B cell (primary cell): ENCODE measurements at regions of chr5 and their contacts with region 1.

Region 1: GRCh38 chr5:139392678-139393496 is 2.0 kb downstream of the PROB1 start:
- DNase-seq: peak; percentile 93
- ATAC-seq: peak; percentile 56
- H3K4me3 ChIP-seq: peak overlapping the region; percentile 69 to 90 (median 80)
- H3K4me3 Mint-ChIP-seq: peak overlapping the region; percentile 99
- H3K27ac ChIP-seq: peak overlapping the region; percentile 60 to 65
- H3K27ac Mint-ChIP-seq: peak overlapping the region; percentile 93
- H3K4me1 ChIP-seq: peaks cover 44 to 60% of the 10 kb centered on the region in 2 donors
- H3K4me1 Mint-ChIP-seq: peaks cover 46% of the 10 kb centered on the region
- H3K27me3 ChIP-seq: no peaks in the 10 kb centered on the region
- H3K27me3 Mint-ChIP-seq: no peaks in the 10 kb centered on the region
- CTCF ChIP-seq: peak; percentile 94

Region 2: GRCh38 chr5:139251281-139251687 is 141.6 kb before region 1 on chr5:
- CTCF ChIA-PET with region 1: interaction called, 6 read pairs
- POLR2A ChIA-PET with region 1: no interaction called
- intact Hi-C with region 1: loop called (anchors 1 kb)
- DNase-seq: peak; percentile 63
- ATAC-seq: peak; percentile 41
- H3K4me3 ChIP-seq: no peak overlapping the region
- H3K4me3 Mint-ChIP-seq: no peak overlapping the region
- H3K27ac ChIP-seq: no peak overlapping the region
- H3K27ac Mint-ChIP-seq: no peak overlapping the region
- H3K4me1 ChIP-seq: no peaks in the 10 kb centered on the region
- H3K4me1 Mint-ChIP-seq: peaks cover 2% of the 10 kb centered on the region
- H3K27me3 ChIP-seq: no peaks in the 10 kb centered on the region
- H3K27me3 Mint-ChIP-seq: peaks cover 3% of the 10 kb centered on the region
- CTCF ChIP-seq: peak; percentile 59

Region 3: GRCh38 chr5:139341650-139342422 is 51.1 kb before region 1 on chr5 and contains the start of gene PAIP2:
- CTCF ChIA-PET with region 1: interaction called, 39 read pairs
- POLR2A ChIA-PET with region 1: interaction called, 70 read pairs
- intact Hi-C with region 1: loop called (anchors 1 kb)
- DNase-seq: peak; percentile 98
- ATAC-seq: peak; percentile 89
- H3K4me3 ChIP-seq: peak within 1 kb of the TSS; percentile 63 to 99 (median 98)
- H3K4me3 Mint-ChIP-seq: peak within 1 kb of the TSS; percentile 100
- H3K27ac ChIP-seq: peak within 1 kb of the TSS; percentile 91 to 96
- H3K27ac Mint-ChIP-seq: peak within 1 kb of the TSS; percentile 100
- H3K4me1 ChIP-seq: peaks cover 29 to 31% of the 10 kb centered on the region in 2 donors
- H3K4me1 Mint-ChIP-seq: peaks cover 48% of the 10 kb centered on the region
- H3K27me3 ChIP-seq: no peaks in the 10 kb centered on the region
- H3K27me3 Mint-ChIP-seq: no peaks in the 10 kb centered on the region
- CTCF ChIP-seq: peak; percentile 72
- total RNA-seq, gene PAIP2: 109 and 121 TPM in 2 replicates

Region 4: DNA sequence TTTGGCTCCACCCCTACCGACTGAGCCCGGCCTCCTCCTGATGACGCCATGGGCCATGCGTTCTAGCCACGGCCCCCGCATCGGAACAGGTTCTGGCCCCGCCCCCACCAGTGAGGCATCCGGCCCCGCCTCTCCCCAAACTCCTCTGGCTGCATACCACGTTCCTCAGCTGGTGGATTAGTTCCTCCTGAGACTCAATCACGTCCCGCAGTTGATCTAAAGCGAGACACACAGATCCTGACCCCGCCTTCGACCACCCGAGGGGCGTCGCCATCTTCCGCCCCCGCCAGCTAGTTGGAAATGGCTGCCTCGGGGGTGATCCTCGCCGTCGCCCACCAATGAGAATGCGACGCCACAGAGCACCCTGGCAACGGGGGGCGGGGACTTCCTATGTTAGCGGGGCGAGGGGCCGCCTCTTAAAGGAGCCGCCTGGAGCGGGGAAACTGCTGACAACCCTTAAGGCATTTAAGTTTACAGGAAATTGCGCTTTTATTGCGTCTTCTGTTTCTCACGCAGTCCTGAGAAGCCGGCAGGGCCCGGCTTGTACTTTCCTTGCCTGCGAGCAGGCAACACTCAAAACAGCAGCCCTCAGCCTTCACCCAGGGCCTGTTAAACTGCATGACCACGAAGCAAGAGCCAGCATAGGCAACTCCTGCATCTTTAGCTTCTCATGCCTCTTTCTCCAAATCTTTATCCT is 11.0 kb after region 1 on chr5 and contains the start of gene SPATA24:
- CTCF ChIA-PET with region 1: interaction called, 6 read pairs
- POLR2A ChIA-PET with region 1: interaction called, 6 read pairs
- intact Hi-C with region 1: loop called (anchors 1 kb)
- DNase-seq: peak; percentile 99
- ATAC-seq: peak; percentile 85
- H3K4me3 ChIP-seq: peak within 1 kb of the TSS; percentile 50 to 73 (median 68)
- H3K4me3 Mint-ChIP-seq: peak within 1 kb of the TSS; percentile 95
- H3K27ac ChIP-seq: peak within 1 kb of the TSS; percentile 85 to 86
- H3K27ac Mint-ChIP-seq: peak within 1 kb of the TSS; percentile 97
- H3K4me1 ChIP-seq: peaks cover 33 to 43% of the 10 kb centered on the region in 2 donors
- H3K4me1 Mint-ChIP-seq: peaks cover 43% of the 10 kb centered on the region
- H3K27me3 ChIP-seq: no peaks in the 10 kb centered on the region
- H3K27me3 Mint-ChIP-seq: no peaks in the 10 kb centered on the region
- CTCF ChIP-seq: no peak
- total RNA-seq, gene SPATA24: 6.4 and 8.2 TPM in 2 replicates

Region 5: DNA sequence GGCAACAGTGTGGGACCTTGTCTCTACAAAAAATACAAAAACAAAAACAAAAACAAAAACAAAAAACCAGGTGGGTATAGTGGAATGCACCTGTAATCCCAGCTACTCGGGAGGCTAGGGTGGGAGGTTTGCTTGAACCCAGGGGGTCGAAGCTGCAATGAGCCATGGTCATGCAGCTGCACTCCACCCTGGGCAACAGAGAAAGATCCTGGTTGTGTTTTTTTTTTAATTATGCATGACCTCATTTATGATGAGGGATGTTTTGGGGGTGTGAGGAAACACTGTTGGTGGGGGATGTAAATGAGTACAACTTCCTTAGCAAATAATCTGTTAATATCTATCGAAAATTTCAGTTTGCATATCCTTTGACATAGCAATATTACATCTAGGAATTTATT is 138.9 kb after region 1 on chr5:
- CTCF ChIA-PET with region 1: no interaction called
- POLR2A ChIA-PET with region 1: no interaction called
- intact Hi-C with region 1: no loop called
- DNase-seq: no peak
- ATAC-seq: no peak
- H3K4me3 ChIP-seq: no peak overlapping the region
- H3K4me3 Mint-ChIP-seq: no peak overlapping the region
- H3K27ac ChIP-seq: no peak overlapping the region
- H3K27ac Mint-ChIP-seq: no peak overlapping the region
- H3K4me1 ChIP-seq: no peaks in the 10 kb centered on the region
- H3K4me1 Mint-ChIP-seq: peaks cover under 1% of the 10 kb centered on the region
- H3K27me3 ChIP-seq: no peaks in the 10 kb centered on the region
- H3K27me3 Mint-ChIP-seq: no peaks in the 10 kb centered on the region
- CTCF ChIP-seq: no peak